HCT116 (cell line): ENCODE measurements at regions of chr16 and their contacts with region 1.

Region 1: GRCh38 chr16:19252904-19253303 is 32.6 kb upstream of the CLEC19A start:
- DNase-seq: no peak
- ATAC-seq: no peak
- H3K4me3 ChIP-seq: no peak overlapping the region
- H3K27ac ChIP-seq: no peak overlapping the region
- H3K4me1 ChIP-seq: no peaks in the 10 kb centered on the region
- H3K27me3 ChIP-seq: no peaks in the 10 kb centered on the region
- CTCF ChIP-seq: no peak
- POLR2A ChIP-seq: no peak
- RAD21 ChIP-seq: no peak

Region 2: DNA sequence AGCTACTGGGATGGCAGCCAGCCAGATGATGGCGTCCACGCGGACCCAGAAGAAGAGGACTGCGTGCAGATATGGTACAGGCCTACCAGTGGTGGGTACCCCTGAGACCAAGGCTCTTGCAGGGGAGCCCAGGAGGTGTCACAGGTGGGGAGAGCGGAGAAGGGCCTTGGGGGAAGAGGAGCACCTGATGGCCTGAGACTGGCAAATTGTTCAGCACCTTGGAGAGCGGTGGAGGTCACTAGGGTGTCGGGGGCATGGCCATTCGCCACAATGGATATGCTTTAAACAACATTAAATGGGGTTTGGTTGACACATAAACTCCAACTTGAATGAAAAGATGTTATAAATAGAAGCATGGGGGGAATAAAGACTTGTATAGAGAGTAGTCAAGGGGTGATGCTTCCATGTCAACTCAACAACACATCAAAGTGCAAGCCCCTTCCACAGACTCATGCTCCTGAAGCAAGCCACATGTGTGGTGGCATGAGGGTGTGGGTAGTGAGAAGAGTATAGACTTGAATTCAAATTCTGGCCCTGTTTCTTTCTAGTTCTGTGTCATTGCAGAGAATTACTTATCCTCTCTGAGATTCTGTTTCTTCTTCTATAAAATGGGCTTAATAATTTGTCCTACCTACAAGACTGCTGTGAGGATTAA is 54.8 kb after region 1 on chr16:
- CTCF ChIA-PET with region 1: no interaction called
- POLR2A ChIA-PET with region 1: no interaction called
- RAD21 ChIA-PET with region 1: no interaction called
- intact Hi-C with region 1: loop called (anchors 1 kb)
- DNase-seq: no peak
- ATAC-seq: no peak
- H3K4me3 ChIP-seq: no peak overlapping the region
- H3K27ac ChIP-seq: no peak overlapping the region
- H3K4me1 ChIP-seq: peaks cover 0 to 5% of the 10 kb centered on the region in 2 experiments; a peak in 1 of 4 replicates
- H3K27me3 ChIP-seq: no peaks in the 10 kb centered on the region
- CTCF ChIP-seq: no peak
- POLR2A ChIP-seq: no peak
- RAD21 ChIP-seq: no peak

Region 3: DNA sequence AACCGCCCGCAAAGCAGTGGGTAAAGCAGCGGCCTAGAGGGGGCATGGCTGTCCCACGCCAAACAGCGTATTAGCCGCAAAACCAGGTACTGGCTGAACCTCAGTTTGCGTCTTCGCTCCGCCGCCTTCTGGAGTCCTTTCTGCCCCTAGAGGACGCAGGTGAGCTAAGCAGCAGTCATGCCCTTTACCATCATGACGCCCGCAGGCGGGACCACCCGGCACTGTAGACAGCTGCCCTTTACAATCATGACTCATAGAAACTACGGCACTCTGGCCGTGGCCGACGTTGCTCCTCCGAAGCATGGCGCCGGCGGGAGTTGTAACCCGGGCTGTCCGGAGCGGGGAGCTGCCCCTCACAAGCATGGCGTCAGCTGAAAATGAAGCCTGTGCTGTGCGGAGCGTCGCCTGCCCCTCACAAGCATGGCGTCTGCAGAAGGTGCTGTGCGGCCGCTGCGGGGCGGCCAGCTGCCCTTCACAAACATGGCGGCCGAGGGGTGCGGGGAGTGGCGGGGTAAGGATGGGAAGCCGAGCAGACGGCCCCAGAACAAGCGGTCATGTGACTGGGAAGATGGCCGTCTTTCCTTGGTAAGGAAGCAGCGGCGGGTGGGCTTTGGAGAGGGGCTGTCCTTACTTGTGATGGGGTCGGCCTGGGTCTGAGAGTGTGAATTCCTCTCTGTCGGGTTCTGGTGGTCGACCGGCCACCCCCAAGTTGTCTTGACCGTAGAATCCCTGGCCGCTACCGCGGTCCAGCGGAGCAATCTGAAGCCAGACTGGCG is 302.4 kb after region 1 on chr16 and contains the start of gene VPS35L:
- CTCF ChIA-PET with region 1: no interaction called
- POLR2A ChIA-PET with region 1: no interaction called
- RAD21 ChIA-PET with region 1: no interaction called
- intact Hi-C with region 1: no loop called
- DNase-seq: peak; percentile 91
- ATAC-seq: peak; percentile 89
- H3K4me3 ChIP-seq: peak within 1 kb of the TSS; percentile 65 to 67
- H3K27ac ChIP-seq: peak within 1 kb of the TSS; percentile 78
- H3K4me1 ChIP-seq: peaks cover 0 to 8% of the 10 kb centered on the region in 2 experiments; a peak in 2 of 4 replicates
- H3K27me3 ChIP-seq: no peaks in the 10 kb centered on the region
- CTCF ChIP-seq: peak; percentile 38 to 50 (median 43); a peak in 4 of 6 replicates
- POLR2A ChIP-seq: no peak
- RAD21 ChIP-seq: no peak
- total RNA-seq, gene VPS35L: 21.4 TPM